IMR-90 (cell line): ENCODE measurements at regions of chr14 and their contacts with region 1.

Region 1: GRCh38 chr14:90518941-90519256 is 122.1 kb downstream of the CALM1 start:
- DNase-seq: peak; percentile 11
- ATAC-seq: no peak
- H3K4me3 ChIP-seq: no peak overlapping the region
- H3K27ac ChIP-seq: no peak overlapping the region
- H3K4me1 ChIP-seq: peaks cover 3% of the 10 kb centered on the region
- H3K27me3 ChIP-seq: peaks cover 14% of the 10 kb centered on the region; the same call in 1 of the 2 replicates
- CTCF ChIP-seq: peak; percentile 40; the same call in 1 of the 2 replicates
- POLR2A ChIP-seq: no peak
- RAD21 ChIP-seq: peak; percentile 40

Region 2: GRCh38 chr14:90697577-90698206 is 178.8 kb after region 1 on chr14:
- CTCF ChIA-PET with region 1: no interaction called
- POLR2A ChIA-PET with region 1: no interaction called
- dilution Hi-C with region 1: no loop called
- in situ Hi-C with region 1: no loop called
- intact Hi-C with region 1: loop called (anchors 10 kb)
- DNase-seq: peak; percentile 72
- ATAC-seq: peak; percentile 90
- H3K4me3 ChIP-seq: no peak overlapping the region
- H3K27ac ChIP-seq: no peak overlapping the region
- H3K4me1 ChIP-seq: peaks cover 2% of the 10 kb centered on the region; the same call in 1 of the 2 replicates
- H3K27me3 ChIP-seq: no peaks in the 10 kb centered on the region
- CTCF ChIP-seq: peak; percentile 94
- POLR2A ChIP-seq: 0 out of 2 replicates have a peak, but pooled peaks have one; percentile 33
- RAD21 ChIP-seq: peak; percentile 94